ENCODE measurements at regions of chr6 and their contacts with region 1.

Region 1: DNA sequence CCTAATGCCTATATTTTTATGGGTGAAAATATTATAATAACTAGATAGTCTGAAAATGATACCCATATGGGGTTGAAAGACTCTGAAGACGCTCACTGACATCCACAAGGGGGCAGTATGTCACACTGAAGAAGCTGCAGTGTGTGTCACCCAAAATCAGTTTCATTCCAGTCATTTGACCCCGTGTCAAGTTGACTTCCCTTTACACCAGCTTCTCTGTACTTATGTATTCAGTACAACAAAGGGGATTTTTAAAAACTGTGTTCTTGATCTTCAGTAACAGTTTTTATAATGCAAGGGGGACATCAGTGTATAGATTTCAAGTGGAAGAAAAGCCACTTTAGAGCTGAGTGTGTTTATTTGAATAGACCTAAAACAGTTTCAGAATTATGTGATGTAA is 19.3 kb downstream of the FAXC start:
- DNase-seq: peak; percentile 76
- ATAC-seq: peak; percentile 89
- H3K4me3 Mint-ChIP-seq: no peak overlapping the region
- H3K27ac Mint-ChIP-seq: no peak overlapping the region
- H3K4me1 Mint-ChIP-seq: peaks cover 4% of the 10 kb centered on the region
- H3K27me3 Mint-ChIP-seq: peaks cover 3% of the 10 kb centered on the region

Region 2: DNA sequence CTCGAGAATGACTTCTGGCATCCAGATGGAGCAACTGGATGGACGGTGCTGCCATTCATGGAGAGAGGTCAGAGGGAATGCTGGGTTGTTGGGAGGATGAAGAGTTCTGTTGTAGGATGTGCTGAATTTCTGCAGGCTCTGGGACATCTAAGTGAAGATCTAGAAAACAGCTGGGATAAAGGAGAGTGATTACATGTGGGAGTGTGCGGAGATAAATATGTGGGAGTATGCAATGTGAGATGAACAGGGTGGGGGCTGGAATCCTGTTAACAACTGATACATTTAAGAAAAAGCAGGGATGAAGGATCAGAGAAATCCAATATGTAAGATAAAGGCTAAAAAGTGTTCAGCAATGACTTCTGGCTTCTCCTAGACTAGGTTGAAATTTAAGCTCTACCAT is 23.8 kb before region 1 on chr6:
- CTCF ChIA-PET with region 1: no interaction called
- DNase-seq: no peak
- ATAC-seq: no peak
- H3K4me3 Mint-ChIP-seq: no peak overlapping the region
- H3K27ac Mint-ChIP-seq: no peak overlapping the region
- H3K4me1 Mint-ChIP-seq: no peaks in the 10 kb centered on the region
- H3K27me3 Mint-ChIP-seq: peaks cover 11% of the 10 kb centered on the region

Region 3: GRCh38 chr6:99344289-99344688 is 14.1 kb after region 1 on chr6:
- CTCF ChIA-PET with region 1: interaction called, 12 read pairs
- DNase-seq: no peak
- ATAC-seq: peak; percentile 23
- H3K4me3 Mint-ChIP-seq: no peak overlapping the region
- H3K27ac Mint-ChIP-seq: no peak overlapping the region
- H3K4me1 Mint-ChIP-seq: peaks cover 8% of the 10 kb centered on the region
- H3K27me3 Mint-ChIP-seq: peaks cover 59% of the 10 kb centered on the region

Region 4: DNA sequence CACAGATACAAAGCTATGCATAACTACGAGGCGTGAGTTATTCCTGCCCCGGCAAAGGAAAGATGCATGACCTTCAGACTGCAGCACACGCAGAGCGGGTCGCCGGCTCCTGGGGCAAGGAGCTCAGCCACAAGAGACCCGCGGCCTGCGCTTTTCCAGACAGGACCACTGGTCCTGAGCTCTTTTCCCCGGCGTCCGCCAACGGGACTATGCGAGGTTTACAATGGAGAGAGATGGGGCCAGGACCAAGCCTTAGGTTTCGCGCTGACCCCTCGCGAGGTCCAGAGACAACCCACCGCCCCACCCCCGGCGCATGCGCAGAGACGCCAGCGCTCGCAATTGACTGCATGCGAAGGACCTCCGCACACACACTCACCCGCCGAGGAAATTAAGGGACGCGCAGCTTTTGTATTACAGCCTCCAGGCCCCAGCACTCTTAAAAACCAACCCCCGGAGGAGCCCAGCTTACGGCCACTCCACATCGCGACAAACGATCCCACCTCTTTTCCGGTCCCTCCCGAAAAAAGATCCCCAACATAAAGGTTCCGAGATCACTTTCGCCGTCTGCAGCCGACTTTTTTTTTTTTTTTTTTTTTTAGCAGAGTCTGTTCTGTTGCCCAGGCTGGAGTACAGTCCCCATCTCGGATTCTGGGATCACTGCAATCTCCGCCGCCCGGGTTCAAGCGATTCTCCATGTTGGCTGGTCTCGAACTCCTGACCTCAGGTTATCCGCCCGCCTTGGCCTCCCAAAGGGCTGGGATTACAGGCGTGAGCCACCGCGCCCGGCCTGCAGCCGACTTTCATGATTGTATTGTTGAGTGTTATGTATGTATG is 63.8 kb after region 1 on chr6 and contains the start of gene COQ3:
- CTCF ChIA-PET with region 1: interaction called, 17 read pairs
- DNase-seq: peak; percentile 76
- ATAC-seq: peak; percentile 89
- H3K4me3 Mint-ChIP-seq: peak within 1 kb of the TSS; percentile 90
- H3K27ac Mint-ChIP-seq: peak within 1 kb of the TSS; percentile 91
- H3K4me1 Mint-ChIP-seq: peaks cover 11% of the 10 kb centered on the region
- H3K27me3 Mint-ChIP-seq: no peaks in the 10 kb centered on the region
- total RNA-seq, gene COQ3: 10.6 to 12.2 TPM